Activated T-helper 2 cell treated with anti-CD3 and anti-CD28 coated beads, Interferon-gamma antibody, Interleukin-2, Interleukin-4, amounts not matched to agents 10 μg/mL and 5 μg/mL and 100 μg/mL, durations not matched to agents 14 hours and 24 hours and 36 hours (primary cell): ENCODE measurements at regions of chr2 and their contacts with region 1.

Region 1: GRCh38 chr2:113965644-113966043 is 75.8 kb downstream of the ACTR3 start:
- DNase-seq: no peak
- H3K4me3 Mint-ChIP-seq: no peak overlapping the region
- H3K27ac Mint-ChIP-seq: no peak overlapping the region
- H3K4me1 Mint-ChIP-seq: peaks cover 13% of the 10 kb centered on the region
- H3K27me3 Mint-ChIP-seq: no peaks in the 10 kb centered on the region

Region 2: DNA sequence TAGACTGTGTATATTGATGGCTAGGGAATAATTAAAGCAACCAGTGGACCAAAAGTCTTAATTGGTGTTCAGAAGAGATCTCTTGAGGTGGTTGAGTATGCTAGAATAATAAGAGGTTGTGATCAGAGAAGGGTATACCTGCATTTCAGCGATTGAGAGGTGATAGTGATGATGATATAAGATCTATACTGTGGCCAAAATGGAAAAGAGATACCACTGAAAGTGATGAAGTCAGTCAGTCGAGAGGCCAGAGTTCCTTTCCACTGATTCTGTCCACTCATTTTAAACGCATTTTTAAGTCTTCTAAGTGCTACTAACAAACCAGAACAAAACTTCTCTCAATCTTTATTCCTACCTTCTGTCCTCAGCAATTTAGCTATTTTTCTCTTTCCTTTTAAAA is 42.9 kb before region 1 on chr2:
- intact Hi-C with region 1: loop called (anchors 5 kb)
- DNase-seq: no peak
- H3K4me3 Mint-ChIP-seq: no peak overlapping the region
- H3K27ac Mint-ChIP-seq: no peak overlapping the region
- H3K4me1 Mint-ChIP-seq: peaks cover 14% of the 10 kb centered on the region
- H3K27me3 Mint-ChIP-seq: no peaks in the 10 kb centered on the region